MCF 10A (cell line): ENCODE measurements at regions of chr3 and their contacts with region 1.

Region 1: DNA sequence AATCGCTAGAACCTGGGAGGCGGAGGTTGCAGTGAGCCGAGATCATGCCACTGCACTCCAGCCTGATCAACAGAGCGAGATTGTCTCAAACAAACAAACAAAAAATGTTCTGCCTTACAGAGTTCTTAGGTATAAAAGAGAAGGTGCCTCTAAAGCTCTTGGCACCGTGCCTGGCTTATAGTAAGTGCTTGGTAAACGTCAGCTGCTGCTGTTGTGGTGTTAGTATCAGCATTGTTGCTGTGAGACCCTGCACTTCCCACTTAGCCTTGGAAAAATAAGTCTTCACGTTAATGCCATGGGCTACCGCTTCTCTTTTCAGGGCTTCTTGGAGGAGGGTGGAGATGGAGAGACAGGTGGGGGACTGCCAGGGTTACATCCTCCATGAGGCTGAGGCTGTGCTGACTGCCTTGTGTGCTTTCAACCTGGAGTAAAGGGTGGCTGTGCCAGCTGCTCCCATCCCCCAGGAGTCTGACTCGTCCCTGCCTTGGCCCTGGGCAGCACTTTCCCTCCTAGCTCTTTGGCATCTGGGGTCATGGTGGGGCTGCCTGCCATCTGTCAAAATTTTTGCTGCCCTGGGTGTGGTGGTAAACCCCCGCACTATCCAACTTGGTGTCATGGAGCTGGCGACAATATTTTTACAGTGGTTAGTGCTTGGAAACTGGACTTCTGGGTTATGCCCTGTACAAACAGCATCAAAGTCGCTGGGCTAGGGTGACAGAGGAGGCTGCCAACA is 17.8 kb downstream of the FLNB start:
- DNase-seq: peak; percentile 81
- H3K4me3 Mint-ChIP-seq: peak overlapping the region; percentile 53
- H3K27ac Mint-ChIP-seq: peak overlapping the region; percentile 88
- H3K4me1 Mint-ChIP-seq: peaks cover 46% of the 10 kb centered on the region
- H3K27me3 Mint-ChIP-seq: no peaks in the 10 kb centered on the region
- CTCF ChIP-seq: no peak

Region 2: DNA sequence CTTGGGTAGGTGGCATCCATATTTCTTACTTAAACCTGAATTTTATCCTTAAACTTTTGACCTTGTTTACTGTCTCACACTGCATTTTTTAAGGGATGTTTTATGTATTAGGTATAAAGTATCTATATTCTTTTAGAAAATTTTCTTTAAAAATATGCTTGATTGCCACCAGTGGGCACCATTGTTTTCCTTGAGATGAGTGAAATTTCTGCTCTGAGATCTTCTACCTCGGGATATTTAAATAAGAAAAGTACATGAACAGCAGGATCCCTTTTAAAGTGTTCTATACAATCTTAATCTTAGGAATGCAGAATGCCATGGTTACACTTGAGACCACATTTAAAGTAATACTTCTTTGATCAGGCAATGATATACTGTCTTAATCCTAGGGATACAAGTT is 161.2 kb before region 1 on chr3:
- CTCF ChIA-PET with region 1: interaction called, 5 read pairs
- POLR2A ChIA-PET with region 1: interaction called, 3 read pairs
- intact Hi-C with region 1: loop called (anchors 1 kb)
- DNase-seq: peak; percentile 21
- H3K4me3 Mint-ChIP-seq: no peak overlapping the region
- H3K27ac Mint-ChIP-seq: peak overlapping the region; percentile 61
- H3K4me1 Mint-ChIP-seq: no peaks in the 10 kb centered on the region
- H3K27me3 Mint-ChIP-seq: no peaks in the 10 kb centered on the region
- CTCF ChIP-seq: peak; percentile 46

Region 3: DNA sequence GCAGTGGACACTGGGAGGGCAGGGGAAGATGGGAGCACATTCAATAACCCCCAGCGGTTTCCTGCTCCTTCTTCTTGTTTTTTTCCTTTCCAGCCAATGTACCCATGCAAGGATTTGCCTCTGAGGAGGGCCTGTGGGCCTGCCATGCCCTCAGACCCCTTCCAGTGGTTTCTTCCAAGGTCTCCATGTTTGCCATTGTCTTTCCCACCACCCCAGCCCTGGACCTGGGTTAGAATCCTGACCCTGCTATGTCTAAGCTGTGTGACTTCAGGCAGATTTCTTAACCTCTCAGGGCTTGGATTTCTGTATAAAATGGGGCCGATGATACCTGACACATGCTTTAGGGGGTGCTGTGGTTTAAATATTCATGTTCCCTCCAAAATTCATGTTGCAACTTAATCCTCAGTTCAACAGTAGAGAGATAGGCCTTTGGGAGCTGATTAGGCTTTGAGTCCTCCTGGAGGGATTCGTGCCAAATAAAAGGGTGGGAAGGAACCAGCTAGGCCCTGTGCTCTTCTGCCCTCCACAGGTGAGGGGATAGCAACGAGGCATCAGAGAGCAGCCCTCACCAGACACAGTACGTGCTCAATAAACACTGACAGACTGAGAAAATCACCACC is 64.1 kb before region 1 on chr3:
- CTCF ChIA-PET with region 1: interaction called, 11 read pairs
- POLR2A ChIA-PET with region 1: interaction called, 5 read pairs
- intact Hi-C with region 1: loop called (anchors 2 kb)
- DNase-seq: peak; percentile 79
- H3K4me3 Mint-ChIP-seq: no peak overlapping the region
- H3K27ac Mint-ChIP-seq: no peak overlapping the region
- H3K4me1 Mint-ChIP-seq: peaks cover 14% of the 10 kb centered on the region
- H3K27me3 Mint-ChIP-seq: no peaks in the 10 kb centered on the region
- CTCF ChIP-seq: peak; percentile 70

Region 4: DNA sequence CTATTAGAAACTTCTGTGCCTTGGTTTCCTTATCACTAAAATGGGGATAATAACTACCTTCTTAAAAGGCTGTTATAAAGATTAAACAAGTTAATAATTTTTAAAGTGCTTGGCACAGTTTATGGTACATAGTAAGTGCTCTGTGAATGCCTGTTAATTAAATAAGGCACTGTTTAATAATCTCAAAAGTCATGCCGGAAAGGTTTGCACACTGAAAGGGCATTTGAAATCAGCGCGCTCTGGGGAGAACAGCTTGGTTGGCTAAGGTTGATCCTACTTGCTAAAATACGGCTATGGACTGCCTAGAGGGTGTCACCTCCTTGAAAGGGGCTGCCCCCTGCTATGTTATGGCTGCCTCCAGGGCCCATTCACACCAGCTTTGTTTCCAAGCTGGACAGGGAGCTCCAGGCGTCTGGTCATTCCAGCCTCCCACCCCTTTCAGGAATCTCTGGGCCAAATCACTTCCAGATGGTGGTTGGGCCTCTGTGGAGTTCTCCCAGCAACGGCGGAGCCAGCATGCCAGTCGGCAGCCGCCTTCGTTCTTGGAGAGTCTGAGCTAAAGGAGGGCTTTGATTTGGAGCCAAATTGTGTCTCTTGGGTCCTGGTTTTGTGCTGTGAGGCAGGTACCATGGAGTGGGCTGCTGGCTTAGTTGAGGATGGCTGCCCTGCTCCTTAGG is 11.9 kb before region 1 on chr3:
- CTCF ChIA-PET with region 1: interaction called, 47 read pairs
- POLR2A ChIA-PET with region 1: interaction called, 33 read pairs
- intact Hi-C with region 1: no loop called
- DNase-seq: no peak
- H3K4me3 Mint-ChIP-seq: no peak overlapping the region
- H3K27ac Mint-ChIP-seq: no peak overlapping the region
- H3K4me1 Mint-ChIP-seq: peaks cover 55% of the 10 kb centered on the region
- H3K27me3 Mint-ChIP-seq: no peaks in the 10 kb centered on the region
- CTCF ChIP-seq: no peak

Region 5: DNA sequence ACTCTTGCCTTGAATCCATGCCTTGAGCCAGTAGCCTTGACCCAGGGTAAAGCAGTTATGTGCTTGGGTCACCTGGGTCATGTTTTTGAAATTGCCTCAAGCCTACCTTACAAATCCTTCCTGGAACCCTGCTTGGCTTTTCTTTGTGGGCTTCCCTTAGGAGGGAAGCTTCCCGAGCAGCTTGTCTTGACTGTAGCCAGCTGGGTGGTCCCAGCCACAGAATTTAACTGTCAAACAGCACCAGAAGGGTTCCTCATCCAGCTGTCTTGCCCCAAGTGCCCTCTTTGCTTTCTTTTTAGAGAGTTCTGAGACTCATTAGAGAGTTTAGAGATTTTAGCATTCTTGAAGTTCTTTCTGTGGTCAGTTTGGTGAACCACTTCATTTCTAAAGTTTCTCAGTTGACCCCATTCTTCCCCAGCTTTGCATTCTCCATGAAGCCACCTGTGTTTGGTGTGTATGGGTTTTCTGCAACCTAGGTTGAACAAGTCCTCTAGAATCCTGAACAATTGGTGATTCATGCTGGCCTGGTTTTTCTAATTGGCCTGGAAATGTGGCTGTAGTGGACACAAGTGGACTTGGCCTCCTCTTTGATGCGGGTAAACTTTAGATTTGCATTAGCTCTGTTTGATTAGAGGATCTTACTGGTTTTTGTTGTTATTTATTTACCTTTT is 15.8 kb after region 1 on chr3:
- CTCF ChIA-PET with region 1: interaction called, 5 read pairs
- POLR2A ChIA-PET with region 1: interaction called, 57 read pairs
- intact Hi-C with region 1: no loop called
- DNase-seq: no peak
- H3K4me3 Mint-ChIP-seq: no peak overlapping the region
- H3K27ac Mint-ChIP-seq: peak overlapping the region; percentile 82
- H3K4me1 Mint-ChIP-seq: peaks cover 54% of the 10 kb centered on the region
- H3K27me3 Mint-ChIP-seq: no peaks in the 10 kb centered on the region
- CTCF ChIP-seq: no peak

Region 6: DNA sequence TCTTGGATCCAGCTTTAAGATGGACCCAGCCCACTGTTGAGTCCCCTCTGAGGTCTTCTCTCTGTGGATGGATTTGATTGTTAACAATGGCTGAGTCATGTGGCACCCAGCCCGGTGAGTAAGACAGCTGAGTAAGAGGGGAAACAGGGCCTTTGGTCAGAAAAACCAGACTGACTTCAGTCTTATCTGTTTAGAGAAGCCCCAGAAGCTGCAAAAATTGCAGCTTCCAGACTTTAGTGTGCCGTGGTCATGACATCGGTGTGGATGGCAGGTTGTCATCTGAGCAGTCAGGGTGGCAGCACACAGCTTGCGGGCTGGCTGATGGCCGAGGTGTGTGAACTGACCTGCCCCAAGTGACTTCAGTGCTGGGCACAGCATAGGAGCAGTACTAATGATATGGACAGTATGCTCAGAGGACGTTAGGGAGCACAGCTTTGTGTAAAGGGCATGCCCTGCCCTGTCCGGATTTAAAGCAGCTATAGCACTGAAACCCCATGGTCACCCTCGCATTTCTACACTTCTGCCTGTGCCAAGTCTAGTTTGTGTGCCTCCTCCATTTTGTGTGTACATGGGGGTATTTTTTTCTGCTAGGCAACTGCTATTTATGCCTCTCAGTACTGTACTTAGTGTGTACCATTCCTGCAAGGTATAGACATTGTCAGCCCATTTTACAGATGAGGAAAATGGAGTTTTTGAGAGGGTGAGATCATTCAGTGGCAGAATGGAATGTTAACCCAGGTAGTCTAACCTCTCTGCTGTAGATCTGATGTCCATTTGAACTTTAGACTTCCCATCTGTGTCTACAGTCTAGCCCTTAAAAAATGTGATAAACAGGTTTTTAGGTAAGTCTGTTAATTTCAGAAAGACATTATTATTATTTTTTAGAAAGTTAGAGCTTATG is 26.6 kb after region 1 on chr3:
- CTCF ChIA-PET with region 1: interaction called, 5 read pairs
- POLR2A ChIA-PET with region 1: interaction called, 22 read pairs
- intact Hi-C with region 1: no loop called
- DNase-seq: peak; percentile 97
- H3K4me3 Mint-ChIP-seq: peak overlapping the region; percentile 68
- H3K27ac Mint-ChIP-seq: peak overlapping the region; percentile 95
- H3K4me1 Mint-ChIP-seq: peaks cover 59% of the 10 kb centered on the region
- H3K27me3 Mint-ChIP-seq: no peaks in the 10 kb centered on the region
- CTCF ChIP-seq: no peak